K562 (cell line): ENCODE measurements at regions of chr3 and their contacts with region 1.

Region 1: GRCh38 chr3:9862391-9863057 is 17.5 kb downstream of the CIDEC start:
- DNase-seq: peak; percentile 96 to 100 (median 99)
- ATAC-seq: peak; percentile 99
- H3K4me3 ChIP-seq: peak overlapping the region; percentile 36
- H3K27ac ChIP-seq: peak overlapping the region; percentile 56
- H3K4me1 ChIP-seq: peaks cover 6 to 30% of the 10 kb centered on the region in 2 experiments; a peak in 4 of 5 replicates
- H3K27me3 ChIP-seq: no peaks in the 10 kb centered on the region
- CTCF ChIP-seq: peak; percentile 68 to 98 (median 95)
- EP300 ChIP-seq: no peak
- POLR2A ChIP-seq: peak; percentile 77
- RAD21 ChIP-seq: peak; percentile 86 to 89

Region 2: DNA sequence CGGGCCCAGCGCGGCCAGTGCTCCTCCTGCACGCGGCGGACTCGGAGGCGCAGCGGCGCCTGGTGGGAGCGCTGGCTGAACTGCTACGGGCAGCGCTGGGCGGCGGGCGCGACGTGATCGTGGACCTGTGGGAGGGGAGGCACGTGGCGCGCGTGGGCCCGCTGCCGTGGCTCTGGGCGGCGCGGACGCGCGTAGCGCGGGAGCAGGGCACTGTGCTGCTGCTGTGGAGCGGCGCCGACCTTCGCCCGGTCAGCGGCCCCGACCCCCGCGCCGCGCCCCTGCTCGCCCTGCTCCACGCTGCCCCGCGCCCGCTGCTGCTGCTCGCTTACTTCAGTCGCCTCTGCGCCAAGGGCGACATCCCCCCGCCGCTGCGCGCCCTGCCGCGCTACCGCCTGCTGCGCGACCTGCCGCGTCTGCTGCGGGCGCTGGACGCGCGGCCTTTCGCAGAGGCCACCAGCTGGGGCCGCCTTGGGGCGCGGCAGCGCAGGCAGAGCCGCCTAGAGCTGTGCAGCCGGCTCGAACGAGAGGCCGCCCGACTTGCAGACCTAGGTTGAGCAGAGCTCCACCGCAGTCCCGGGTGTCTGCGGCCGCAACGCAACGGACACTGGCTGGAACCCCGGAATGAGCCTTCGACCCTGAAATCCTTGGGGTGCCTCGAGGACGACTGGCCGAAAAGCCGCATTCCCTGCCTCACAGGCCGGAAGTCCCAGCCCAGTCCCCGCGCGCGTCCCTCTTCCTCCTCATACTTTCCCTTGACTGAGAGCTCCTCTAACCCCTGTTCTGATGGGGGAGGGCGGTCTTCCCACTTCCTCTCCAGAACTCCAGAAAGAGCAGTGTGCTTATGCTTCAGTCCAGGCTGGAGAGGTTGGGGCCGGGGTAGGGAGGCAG is 53.0 kb after region 1 on chr3:
- CTCF ChIA-PET with region 1: no interaction called
- POLR2A ChIA-PET with region 1: no interaction called
- in situ Hi-C with region 1: no loop called
- intact Hi-C with region 1: loop called (anchors 5 kb)
- DNase-seq: no peak
- ATAC-seq: no peak
- H3K4me3 ChIP-seq: no peak overlapping the region
- H3K27ac ChIP-seq: peak overlapping the region; percentile 36; the same call in 2 of the 3 replicates
- H3K4me1 ChIP-seq: peaks cover 30 to 49% of the 10 kb centered on the region in 2 experiments
- H3K27me3 ChIP-seq: no peaks in the 10 kb centered on the region
- CTCF ChIP-seq: no peak
- EP300 ChIP-seq: no peak
- POLR2A ChIP-seq: no peak
- RAD21 ChIP-seq: no peak

Region 3: GRCh38 chr3:9976721-9977709 is 114.5 kb after region 1 on chr3:
- CTCF ChIA-PET with region 1: no interaction called
- POLR2A ChIA-PET with region 1: no interaction called
- in situ Hi-C with region 1: no loop called
- intact Hi-C with region 1: loop called (anchors 2 kb)
- DNase-seq: peak; percentile 80 to 98 (median 86)
- ATAC-seq: peak; percentile 93
- H3K4me3 ChIP-seq: peak overlapping the region; percentile 27
- H3K27ac ChIP-seq: peak overlapping the region; percentile 99
- H3K4me1 ChIP-seq: peaks cover 37 to 43% of the 10 kb centered on the region in 2 experiments
- H3K27me3 ChIP-seq: no peaks in the 10 kb centered on the region
- CTCF ChIP-seq: no peak
- EP300 ChIP-seq: peak; percentile 94
- POLR2A ChIP-seq: peak; percentile 52
- RAD21 ChIP-seq: 0 out of 4 replicates have a peak, but pooled peaks of 1 of the 2 experiments have one; percentile 13